Mammary epithelial cell (primary cell): ENCODE measurements at regions of chr1 and their contacts with region 1.

Region 1: DNA sequence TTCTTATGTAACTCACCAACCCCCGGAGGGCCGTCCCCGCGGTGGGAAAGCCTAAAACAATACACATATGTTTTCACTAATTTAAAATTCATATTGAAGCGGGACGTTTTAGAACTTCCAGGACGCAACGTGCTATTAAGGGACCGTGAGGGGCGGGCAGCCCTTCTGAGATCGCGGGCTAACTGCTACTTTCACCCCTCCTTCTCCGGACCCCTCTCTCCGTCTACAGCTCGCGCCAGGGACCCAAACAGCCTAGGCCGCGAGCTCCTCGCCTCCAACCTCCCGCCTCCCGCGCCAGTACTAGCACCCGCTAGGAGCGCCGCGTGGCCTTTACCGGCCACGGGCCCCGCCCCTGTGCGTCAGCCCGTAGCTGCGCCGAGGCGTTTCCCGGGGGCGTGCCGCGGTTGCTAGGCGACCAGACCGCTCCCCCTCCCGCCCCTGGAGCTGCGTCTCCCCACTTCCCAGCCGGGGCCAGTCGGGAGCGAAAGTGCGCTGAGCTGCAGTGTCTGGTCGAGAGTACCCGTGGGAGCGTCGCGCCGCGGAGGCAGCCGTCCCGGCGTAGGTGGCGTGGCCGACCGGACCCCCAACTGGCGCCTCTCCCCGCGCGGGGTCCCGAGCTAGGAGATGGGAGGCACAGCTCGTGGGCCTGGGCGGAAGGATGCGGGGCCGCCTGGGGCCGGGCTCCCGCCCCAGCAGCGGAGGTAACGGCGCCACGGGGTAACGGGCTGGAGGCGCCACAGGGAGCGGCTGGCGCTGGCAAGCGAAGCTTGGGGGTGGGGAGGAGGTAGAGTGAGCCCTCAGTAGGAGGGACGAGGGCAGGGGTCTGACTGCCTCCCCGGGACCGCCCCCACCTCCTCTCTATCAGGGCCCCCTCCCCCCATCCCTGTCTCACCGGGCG is at the start of gene DYRK3:
- DNase-seq: peak; percentile 94
- H3K4me3 ChIP-seq: peak within 1 kb of the TSS; percentile 86 to 95 (median 88)
- H3K27ac ChIP-seq: peak within 1 kb of the TSS; percentile 98
- H3K4me1 ChIP-seq: peaks cover 30% of the 10 kb centered on the region
- H3K27me3 ChIP-seq: no peaks in the 10 kb centered on the region
- CTCF ChIP-seq: peak in 1 of 2 donors; percentile 26
- total RNA-seq, gene DYRK3: 23.2 to 35.3 TPM

Region 2: GRCh38 chr1:206563367-206564207 is 71.7 kb before region 1 on chr1:
- CTCF ChIA-PET with region 1: no interaction called
- dilution Hi-C with region 1: no loop called
- in situ Hi-C with region 1: no loop called
- intact Hi-C with region 1: no loop called
- DNase-seq: no peak
- H3K4me3 ChIP-seq: no peak overlapping the region
- H3K27ac ChIP-seq: no peak overlapping the region
- H3K4me1 ChIP-seq: no peaks in the 10 kb centered on the region
- H3K27me3 ChIP-seq: no peaks in the 10 kb centered on the region
- CTCF ChIP-seq: no peak

Region 3: DNA sequence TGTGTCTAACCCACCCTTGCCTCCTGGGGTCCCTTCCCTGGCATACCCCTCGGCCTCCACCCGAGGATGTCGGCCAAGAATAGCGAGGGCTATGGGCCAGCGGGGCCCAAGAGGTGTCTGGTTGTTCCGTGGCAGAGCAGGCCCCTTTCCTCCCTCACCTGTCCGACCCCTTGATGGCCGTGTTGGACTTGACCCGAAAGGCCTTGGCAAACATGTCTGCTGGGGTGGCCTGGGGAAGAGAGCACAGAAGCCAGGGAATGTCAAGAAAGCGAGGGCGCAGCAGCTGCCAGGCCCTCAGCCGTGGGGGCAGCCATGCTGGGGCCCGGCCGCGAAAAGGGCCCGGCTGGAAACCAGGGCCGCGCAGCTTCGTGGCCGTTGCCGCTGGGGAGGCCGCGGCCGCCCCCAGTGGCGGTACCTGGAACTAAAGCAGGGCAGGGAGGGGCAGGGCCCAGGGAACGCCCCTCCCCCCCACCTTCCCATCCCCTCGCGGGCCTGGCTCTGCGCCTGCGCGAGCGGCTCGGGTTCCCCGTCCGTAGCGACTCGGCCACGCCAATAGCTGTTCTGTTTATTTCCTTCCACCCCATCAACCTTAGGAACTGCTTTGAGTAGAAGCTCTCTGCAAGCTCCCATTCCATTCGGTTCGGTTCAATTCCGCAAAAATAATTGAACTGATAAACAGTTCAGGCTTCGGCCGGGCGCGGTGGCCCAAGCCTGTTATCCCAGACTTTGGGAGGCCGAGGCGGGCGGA is 23.0 kb before region 1 on chr1 and contains the start of gene EIF2D:
- CTCF ChIA-PET with region 1: interaction called, 8 read pairs
- dilution Hi-C with region 1: no loop called
- in situ Hi-C with region 1: no loop called
- intact Hi-C with region 1: loop called (anchors 1 kb)
- DNase-seq: peak; percentile 87
- H3K4me3 ChIP-seq: peak within 1 kb of the TSS; percentile 74 to 93 (median 87)
- H3K27ac ChIP-seq: peak within 1 kb of the TSS; percentile 86
- H3K4me1 ChIP-seq: peaks cover 9% of the 10 kb centered on the region
- H3K27me3 ChIP-seq: no peaks in the 10 kb centered on the region
- CTCF ChIP-seq: peak; percentile 74 to 98
- total RNA-seq, gene EIF2D: 43.0 to 44.0 TPM

Region 4: DNA sequence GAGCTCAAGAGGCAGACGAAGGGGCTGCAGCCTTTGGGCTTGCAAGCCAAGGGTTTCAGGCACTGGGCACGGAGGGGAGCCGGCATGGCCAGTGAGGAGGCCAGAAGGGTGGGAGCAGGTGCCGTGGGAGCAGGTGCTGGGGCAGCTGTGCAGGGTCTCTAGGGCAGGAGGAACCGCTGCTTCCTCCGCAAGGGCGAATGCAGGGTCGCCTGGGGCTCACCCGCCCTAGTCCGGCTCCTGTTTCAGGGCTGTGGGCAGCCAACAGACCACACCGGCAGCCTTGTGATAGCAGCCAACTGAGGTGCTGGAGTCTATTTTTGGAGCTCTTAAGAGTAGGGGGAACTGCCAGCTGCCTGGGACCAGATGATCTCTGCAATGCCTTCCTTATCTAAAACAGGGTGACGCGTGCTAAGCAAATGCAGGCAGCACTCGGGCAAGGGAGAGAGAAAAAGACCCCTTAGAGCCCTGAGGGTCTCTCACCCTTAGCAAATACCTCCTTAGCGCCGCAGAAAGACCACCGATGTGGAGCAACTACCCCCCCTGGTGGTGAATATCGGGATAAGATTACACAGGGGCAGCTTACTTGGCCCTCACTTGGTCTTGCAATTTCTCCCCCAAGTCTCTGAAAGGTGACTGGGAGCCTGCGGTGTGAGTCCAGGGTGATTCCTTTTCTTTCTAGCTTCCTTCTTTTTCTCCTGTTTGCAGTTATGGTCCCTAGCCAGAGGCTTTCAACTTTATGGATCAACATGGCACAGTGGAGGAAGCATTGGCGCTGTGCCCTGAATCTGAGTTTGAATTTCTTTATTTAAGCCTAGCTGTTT is 28.7 kb after region 1 on chr1:
- CTCF ChIA-PET with region 1: interaction called, 13 read pairs
- dilution Hi-C with region 1: no loop called
- in situ Hi-C with region 1: no loop called
- intact Hi-C with region 1: loop called (anchors 1 kb)
- DNase-seq: peak; percentile 36
- H3K4me3 ChIP-seq: no peak overlapping the region
- H3K27ac ChIP-seq: no peak overlapping the region
- H3K4me1 ChIP-seq: peaks cover 5% of the 10 kb centered on the region
- H3K27me3 ChIP-seq: no peaks in the 10 kb centered on the region
- CTCF ChIP-seq: peak; percentile 79 to 85

Region 5: GRCh38 chr1:206725109-206725963 is 90.0 kb after region 1 on chr1:
- CTCF ChIA-PET with region 1: no interaction called
- dilution Hi-C with region 1: no loop called
- in situ Hi-C with region 1: no loop called
- intact Hi-C with region 1: loop called (anchors 1 kb)
- DNase-seq: no peak
- H3K4me3 ChIP-seq: no peak overlapping the region
- H3K27ac ChIP-seq: no peak overlapping the region
- H3K4me1 ChIP-seq: peaks cover 19% of the 10 kb centered on the region
- H3K27me3 ChIP-seq: no peaks in the 10 kb centered on the region
- CTCF ChIP-seq: peak; percentile 62 to 68

Region 6: DNA sequence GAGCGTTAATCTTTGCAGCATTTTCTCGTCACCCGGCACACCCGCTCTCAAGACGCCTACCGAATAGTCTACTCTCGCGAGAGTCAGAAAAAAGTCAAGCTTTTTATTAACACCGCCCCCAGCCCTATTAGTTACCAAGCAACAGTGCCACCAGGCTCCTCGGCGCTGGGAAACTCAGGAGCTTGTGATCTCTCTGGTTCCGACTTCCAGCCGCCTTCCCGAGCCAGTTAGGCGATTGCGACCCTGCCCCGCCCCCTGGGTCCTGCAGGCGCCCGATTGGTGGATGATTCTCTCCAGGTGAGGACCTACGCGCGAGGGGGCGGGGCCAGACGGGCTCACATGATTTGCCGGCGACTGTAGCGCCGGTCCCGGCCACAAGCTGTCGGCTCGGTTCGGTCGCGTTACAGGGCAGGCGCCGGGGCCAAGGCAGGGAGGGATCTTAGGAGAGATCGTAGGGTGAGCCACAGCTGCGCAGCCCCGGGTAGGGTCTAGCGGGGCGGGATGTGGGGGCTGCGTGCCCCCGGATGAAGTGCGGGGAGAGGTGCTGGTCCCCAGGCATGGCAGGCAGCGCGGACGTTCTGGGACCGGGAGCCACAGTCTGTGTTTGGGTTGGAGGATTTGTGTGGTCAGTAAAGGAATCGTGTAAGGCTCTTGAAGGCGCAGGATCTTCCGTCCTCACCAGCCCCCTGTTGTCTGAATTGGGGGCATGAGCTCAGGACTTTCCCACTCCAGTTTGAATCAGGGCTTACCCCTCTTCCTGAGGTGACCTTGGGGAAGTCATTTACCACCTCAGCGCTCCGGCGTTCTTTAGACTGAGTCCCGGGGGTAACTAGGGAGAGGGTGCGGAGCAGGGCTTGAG is 417.8 kb after region 1 on chr1 and contains the start of gene PFKFB2:
- CTCF ChIA-PET with region 1: no interaction called
- dilution Hi-C with region 1: no loop called
- in situ Hi-C with region 1: no loop called
- intact Hi-C with region 1: loop called (anchors 10 kb)
- DNase-seq: peak; percentile 99
- H3K4me3 ChIP-seq: peak within 1 kb of the TSS; percentile 77 to 91 (median 80)
- H3K27ac ChIP-seq: peak within 1 kb of the TSS; percentile 95
- H3K4me1 ChIP-seq: peaks cover 34% of the 10 kb centered on the region
- H3K27me3 ChIP-seq: no peaks in the 10 kb centered on the region
- CTCF ChIP-seq: peak in 1 of 2 donors; percentile 29
- total RNA-seq, gene PFKFB2: 34.4 to 38.7 TPM